Left ventricle myocardium superior (tissue), 1 donor: ENCODE measurements at regions of chr5 and their contacts with region 1.

Region 1: GRCh38 chr5:59193616-59194319 is 610.9 kb downstream of the RAB3C start:
- DNase-seq: peak; percentile 33
- ATAC-seq: peak; percentile 89

Region 2: GRCh38 chr5:59367791-59368394 is 174.1 kb after region 1 on chr5:
- intact Hi-C with region 1: loop called (anchors 5 kb)
- DNase-seq: peak; percentile 41
- ATAC-seq: peak; percentile 81